ENCODE measurements at regions of chr1 and their contacts with region 1.

Region 1: GRCh38 chr1:61851849-61852669 is 109.8 kb downstream of the PATJ start:
- DNase-seq: peak; percentile 79
- ATAC-seq: peak; percentile 81
- H3K4me3 ChIP-seq: no peak overlapping the region
- H3K27ac ChIP-seq: no peak overlapping the region
- H3K4me1 ChIP-seq: no peaks in the 10 kb centered on the region
- H3K27me3 ChIP-seq: no peaks in the 10 kb centered on the region
- CTCF ChIP-seq: peak; percentile 86

Region 2: DNA sequence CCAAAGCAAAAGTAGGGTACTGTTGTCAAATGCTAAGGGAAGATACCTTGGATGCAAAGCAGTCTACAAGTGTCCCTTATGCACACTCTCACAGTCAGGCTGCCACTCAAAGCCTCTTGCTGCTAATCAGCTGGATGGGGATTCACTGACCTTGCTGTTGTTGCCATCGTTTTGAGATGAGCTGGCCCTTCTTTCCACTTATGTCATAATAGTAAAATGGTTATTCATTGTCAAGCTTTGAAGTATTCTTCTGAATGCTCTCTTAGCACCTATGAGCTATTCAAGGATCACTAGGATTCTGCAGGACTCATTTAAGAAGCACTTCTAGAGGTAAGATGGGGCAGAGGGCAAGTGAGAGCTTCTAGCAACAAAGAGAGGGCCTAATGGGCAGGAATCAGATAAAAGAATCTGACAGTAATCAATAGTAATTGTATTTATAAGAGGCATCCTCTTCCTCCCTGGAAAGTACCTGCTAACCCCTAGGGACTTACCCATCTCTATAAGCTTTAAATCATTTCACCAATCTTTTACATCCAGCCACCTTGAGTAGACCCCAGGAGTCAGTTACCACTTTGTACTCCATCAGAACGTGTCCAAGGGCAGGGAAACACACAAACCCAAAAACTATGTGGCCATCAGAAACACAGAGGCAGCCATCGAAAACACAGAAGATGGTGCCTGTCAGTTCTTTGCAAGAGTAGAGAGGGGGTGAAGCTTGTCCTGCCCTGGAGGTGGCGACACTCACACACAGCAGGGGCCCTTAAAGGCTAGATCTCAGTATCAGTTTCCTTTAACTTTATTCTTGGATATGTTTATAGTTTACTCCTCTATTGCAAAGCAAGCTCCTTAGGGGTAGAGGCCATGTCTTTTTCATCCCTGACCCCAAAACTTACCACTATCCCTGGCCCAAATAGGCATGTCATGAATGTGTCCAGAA is 873.4 kb before region 1 on chr1:
- CTCF ChIA-PET with region 1: interaction called, 3 read pairs
- POLR2A ChIA-PET with region 1: no interaction called
- intact Hi-C with region 1: loop called (anchors 5 kb)
- DNase-seq: peak; percentile 64
- ATAC-seq: peak; percentile 94
- H3K4me3 ChIP-seq: no peak overlapping the region
- H3K27ac ChIP-seq: no peak overlapping the region
- H3K4me1 ChIP-seq: no peaks in the 10 kb centered on the region
- H3K27me3 ChIP-seq: no peaks in the 10 kb centered on the region
- CTCF ChIP-seq: peak; percentile 93

Region 3: DNA sequence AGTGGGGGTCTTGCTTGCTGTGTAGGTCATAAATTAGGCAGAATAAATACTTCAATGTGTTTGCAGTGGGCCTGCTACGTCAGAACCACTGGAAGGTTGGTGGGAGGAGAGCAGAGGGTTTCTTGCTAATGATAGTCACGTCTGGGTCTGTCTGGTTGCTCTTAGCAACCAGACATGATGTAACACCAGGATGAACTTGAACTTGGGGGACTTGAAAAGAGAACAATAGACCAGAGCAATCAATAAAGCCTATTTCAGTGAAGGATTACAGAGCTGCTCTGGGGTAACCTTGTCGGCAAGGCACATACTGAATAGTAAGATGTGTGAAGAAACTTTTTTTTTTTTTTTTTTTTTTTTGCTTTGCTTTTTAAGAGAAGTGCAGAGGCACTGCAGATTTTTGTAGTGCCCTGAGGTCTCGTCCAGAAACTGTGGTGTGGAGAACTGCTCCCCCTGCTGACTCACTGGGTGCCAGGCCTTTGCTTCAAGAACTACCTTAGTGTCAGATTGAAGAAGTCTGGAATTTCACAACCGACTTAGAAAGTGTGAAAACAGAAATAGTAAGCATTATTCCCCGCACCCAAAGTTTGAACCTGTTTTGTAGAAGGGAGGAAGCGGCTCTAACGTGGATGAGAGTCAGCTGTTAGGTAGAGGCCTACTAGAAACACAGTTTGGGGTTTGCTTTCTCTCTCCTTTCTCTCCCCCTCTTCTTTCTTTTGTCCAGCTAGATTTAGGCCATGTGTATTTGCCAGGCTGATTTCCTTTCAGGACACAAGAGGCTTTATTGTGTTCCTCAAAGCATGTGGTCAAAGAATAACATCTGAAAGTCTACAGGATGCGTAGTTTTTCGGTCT is 398.7 kb before region 1 on chr1:
- CTCF ChIA-PET with region 1: no interaction called
- POLR2A ChIA-PET with region 1: no interaction called
- intact Hi-C with region 1: loop called (anchors 5 kb)
- DNase-seq: peak; percentile 83
- ATAC-seq: peak; percentile 96
- H3K4me3 ChIP-seq: no peak overlapping the region
- H3K27ac ChIP-seq: no peak overlapping the region
- H3K4me1 ChIP-seq: peaks cover 35% of the 10 kb centered on the region
- H3K27me3 ChIP-seq: no peaks in the 10 kb centered on the region
- CTCF ChIP-seq: peak; percentile 86

Region 4: DNA sequence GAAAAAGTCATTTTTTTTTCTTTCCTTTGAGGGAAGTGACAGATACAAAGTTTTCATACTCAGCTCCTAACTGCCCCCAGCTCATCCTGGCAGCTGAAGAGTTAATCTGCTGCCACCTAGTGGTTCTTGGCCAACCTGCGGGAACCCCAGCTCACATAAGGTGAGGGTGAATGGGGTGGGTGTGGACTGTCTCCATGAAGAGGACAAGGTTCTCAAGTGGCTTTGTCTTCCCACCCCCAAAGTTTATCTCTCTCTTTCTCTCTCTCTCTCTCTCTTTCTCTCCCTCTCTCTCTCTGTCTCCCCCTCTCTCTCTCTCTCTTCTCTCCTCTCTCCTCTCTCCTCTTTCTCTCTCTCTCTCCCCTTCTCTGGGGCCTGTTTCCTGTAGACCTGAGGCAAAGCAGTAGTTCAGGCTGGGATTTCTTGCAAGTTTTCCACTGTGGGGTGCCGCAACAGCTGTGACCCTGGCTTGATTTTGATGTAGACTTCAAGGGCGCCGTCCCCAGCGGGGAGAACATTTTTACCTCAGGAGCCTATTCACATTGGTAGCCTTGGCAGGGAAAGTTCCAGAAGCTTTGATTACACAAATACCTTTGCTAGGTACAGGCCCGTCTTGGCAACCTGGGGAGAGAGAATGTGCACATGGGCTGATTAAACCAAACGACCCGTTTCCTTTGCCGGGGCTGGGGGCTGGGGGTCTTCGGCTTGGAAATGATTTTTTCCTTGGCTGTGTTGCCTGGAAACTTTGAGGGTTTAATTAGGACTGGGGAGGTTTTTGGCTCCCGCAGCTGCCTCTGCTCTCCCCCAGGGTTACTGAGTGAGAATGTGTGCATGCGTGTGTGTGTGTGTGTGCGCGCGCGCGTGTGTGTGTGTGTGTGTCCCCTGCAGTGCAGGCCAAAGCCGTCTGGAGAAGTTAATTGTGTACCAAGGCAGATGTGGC is 263.1 kb before region 1 on chr1:
- CTCF ChIA-PET with region 1: no interaction called
- POLR2A ChIA-PET with region 1: no interaction called
- intact Hi-C with region 1: loop called (anchors 2 kb)
- DNase-seq: peak; percentile 88
- ATAC-seq: peak; percentile 98
- H3K4me3 ChIP-seq: no peak overlapping the region
- H3K27ac ChIP-seq: no peak overlapping the region
- H3K4me1 ChIP-seq: peaks cover 12% of the 10 kb centered on the region; the same call in 1 of the 2 replicates
- H3K27me3 ChIP-seq: no peaks in the 10 kb centered on the region
- CTCF ChIP-seq: peak; percentile 96

Region 5: DNA sequence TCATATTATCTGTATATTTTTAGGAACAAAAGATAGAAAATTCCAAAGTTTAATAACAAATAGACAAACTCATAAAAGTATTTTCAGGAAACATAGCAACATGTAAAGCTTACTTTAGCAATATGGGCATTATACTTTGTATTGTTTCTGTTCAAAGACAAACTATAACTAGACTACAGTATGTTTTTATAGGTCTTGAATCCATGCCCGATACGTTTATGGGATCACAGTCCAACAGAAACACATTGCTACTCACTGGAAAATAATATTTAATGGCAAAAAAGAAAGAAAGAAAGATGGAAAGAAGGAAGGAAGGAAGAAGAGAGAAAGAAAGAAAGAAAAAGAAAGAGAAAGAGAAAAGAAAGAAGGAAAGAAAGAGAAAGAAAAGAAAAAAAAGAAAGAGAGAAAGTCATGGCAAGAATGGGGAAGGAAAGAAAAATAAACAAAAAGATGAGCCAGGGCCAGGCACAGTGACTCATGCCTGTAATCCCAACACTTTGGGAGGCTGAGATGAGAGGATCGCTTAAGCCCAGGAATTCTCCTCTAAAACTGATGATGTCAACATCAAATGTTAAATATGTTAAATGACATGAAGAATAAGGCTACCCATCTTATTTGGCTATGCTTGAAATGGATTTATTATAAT is 159.8 kb before region 1 on chr1:
- CTCF ChIA-PET with region 1: no interaction called
- POLR2A ChIA-PET with region 1: no interaction called
- intact Hi-C with region 1: loop called (anchors 10 kb)
- DNase-seq: peak; percentile 55
- ATAC-seq: peak; percentile 85
- H3K4me3 ChIP-seq: peak overlapping the region; percentile 51
- H3K27ac ChIP-seq: peak overlapping the region; percentile 35; the same call in 1 of the 2 replicates
- H3K4me1 ChIP-seq: peaks cover 10% of the 10 kb centered on the region
- H3K27me3 ChIP-seq: no peaks in the 10 kb centered on the region
- CTCF ChIP-seq: no peak

Region 6: GRCh38 chr1:61808968-61809367 is 43.1 kb before region 1 on chr1:
- CTCF ChIA-PET with region 1: interaction called, 10 read pairs
- POLR2A ChIA-PET with region 1: no interaction called
- intact Hi-C with region 1: no loop called
- DNase-seq: peak; percentile 1
- ATAC-seq: no peak
- H3K4me3 ChIP-seq: no peak overlapping the region
- H3K27ac ChIP-seq: no peak overlapping the region
- H3K4me1 ChIP-seq: no peaks in the 10 kb centered on the region
- H3K27me3 ChIP-seq: no peaks in the 10 kb centered on the region
- CTCF ChIP-seq: no peak

Region 7: DNA sequence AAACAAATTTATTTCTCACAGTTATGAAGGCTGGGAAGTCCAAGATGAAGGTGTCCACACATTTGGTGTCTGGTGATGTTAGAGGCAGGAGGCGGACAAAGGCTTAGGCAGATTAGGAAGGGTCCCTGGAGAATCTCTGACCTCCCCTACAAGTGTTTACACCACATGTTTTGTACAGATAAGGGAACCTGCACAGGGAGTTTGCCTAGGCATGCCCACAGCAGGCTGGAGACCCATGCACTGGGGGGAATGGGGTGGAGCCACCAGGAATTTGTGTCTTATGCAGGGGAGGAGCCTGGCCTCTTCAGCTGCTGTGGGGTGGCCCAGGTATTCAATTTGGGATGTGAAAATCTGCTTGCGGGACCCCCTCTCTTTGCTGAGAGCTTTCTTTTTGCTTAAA is 21.5 kb after region 1 on chr1:
- CTCF ChIA-PET with region 1: no interaction called
- POLR2A ChIA-PET with region 1: no interaction called
- intact Hi-C with region 1: no loop called
- DNase-seq: no peak
- ATAC-seq: no peak
- H3K4me3 ChIP-seq: no peak overlapping the region
- H3K27ac ChIP-seq: no peak overlapping the region
- H3K4me1 ChIP-seq: no peaks in the 10 kb centered on the region
- H3K27me3 ChIP-seq: no peaks in the 10 kb centered on the region
- CTCF ChIP-seq: no peak

Measured in PC-3 (cell line).